Ovary (tissue), 10 donors: ENCODE measurements at regions of chr6 and their contacts with region 1.

Region 1: DNA sequence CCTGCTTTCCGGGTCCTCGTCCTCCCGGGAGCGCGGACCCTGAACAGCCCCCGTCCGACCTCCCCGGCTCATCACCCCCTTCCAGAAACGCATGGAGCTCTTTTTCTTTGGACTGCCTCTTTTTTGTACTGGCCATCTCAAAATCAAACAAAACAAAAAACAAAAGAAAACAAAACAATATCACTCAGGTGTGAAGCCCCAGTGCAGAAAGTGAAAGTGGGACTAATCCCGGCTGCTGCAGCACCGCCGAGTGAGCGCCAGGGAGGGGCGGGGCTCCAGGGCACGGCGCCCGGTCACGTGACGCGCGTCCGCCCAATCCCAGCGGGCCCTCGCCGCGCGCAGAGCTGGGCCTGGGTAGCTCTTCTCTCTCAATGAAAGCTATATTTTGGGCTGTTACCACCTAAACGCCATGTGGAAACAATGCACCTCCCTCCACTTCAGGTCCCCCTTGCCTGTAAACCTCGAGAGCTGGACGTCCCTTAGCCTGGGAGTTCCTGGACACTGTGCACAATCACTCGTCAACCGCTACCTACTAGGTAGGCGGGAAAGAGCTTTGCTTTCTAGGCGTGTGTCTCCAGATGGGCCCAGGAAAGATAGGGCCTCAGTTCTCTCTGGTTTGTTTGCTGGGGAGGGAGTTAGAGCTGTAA is 93.7 kb upstream of the PRDM1 start:
- DNase-seq: peak; percentile 84 to 92 (median 87)
- H3K4me3 ChIP-seq: peak overlapping the region; percentile 68
- H3K27ac ChIP-seq: no peak overlapping the region
- H3K4me1 ChIP-seq: no peaks in the 10 kb centered on the region
- H3K27me3 ChIP-seq: no peaks in the 10 kb centered on the region
- CTCF ChIP-seq: peak in 1 of 3 donors; percentile 8
- EP300 ChIP-seq: no peak
- POLR2A ChIP-seq: peak; percentile 17

Region 2: GRCh38 chr6:105484238-105485161 is 507.9 kb before region 1 on chr6:
- intact Hi-C with region 1: loop called in 1 of 4 experiments (anchors 10 kb)
- DNase-seq: no peak
- H3K4me3 ChIP-seq: no peak overlapping the region
- H3K27ac ChIP-seq: no peak overlapping the region
- H3K4me1 ChIP-seq: peaks cover 5% of the 10 kb centered on the region
- H3K27me3 ChIP-seq: no peaks in the 10 kb centered on the region
- CTCF ChIP-seq: peak; percentile 77 to 97 (median 79)
- EP300 ChIP-seq: no peak
- POLR2A ChIP-seq: no peak

Region 3: DNA sequence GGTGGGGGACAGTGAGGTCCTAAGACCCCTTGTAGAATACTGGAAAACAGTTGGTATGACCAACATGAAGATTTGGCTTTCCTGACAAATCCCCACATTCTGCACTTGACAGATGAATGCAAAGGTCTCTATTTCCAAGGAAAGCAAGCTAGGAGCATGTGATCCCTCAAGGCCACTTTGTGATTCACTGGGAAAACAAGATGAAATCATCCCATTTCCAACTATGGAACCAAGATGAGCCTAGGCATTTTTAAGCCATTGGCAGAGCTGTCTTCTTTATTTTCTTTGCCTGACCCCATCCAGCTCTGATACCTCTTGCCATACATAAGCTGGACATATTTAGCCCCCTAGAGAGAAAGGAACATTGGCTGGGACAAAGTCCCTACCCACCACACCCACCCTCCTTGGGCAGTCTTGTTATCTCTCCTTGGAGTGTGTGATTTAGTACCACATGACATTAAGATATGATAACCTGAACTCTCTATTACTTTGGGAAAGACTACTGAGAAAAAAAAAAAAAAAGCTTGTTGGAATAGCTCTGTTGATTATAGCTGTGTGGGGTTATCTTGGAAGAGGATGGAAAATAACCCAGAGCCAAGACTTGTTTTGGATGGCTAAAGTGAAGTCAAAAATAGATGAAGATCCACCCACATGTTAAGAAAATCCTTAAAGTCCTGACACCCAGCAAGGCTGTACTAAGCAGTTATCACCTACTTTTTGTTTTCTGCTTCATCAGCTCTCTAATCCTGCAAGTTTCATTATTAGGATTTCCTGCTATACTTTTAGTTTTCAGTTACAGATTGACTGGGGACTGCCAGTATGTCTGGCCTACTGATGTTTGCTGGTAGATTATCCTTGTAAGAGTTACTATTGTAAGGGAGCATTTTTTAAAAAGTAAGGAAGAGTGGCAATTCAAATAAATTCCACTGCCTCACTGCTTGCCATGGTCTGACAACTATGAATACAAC is 499.4 kb before region 1 on chr6:
- intact Hi-C with region 1: loop called in 2 of 4 experiments (anchors 10 kb)
- DNase-seq: peak in 2 of 5 donors; percentile 26 to 33
- H3K4me3 ChIP-seq: no peak overlapping the region
- H3K27ac ChIP-seq: peak overlapping the region; percentile 33 to 74
- H3K4me1 ChIP-seq: peaks cover 13% of the 10 kb centered on the region
- H3K27me3 ChIP-seq: no peaks in the 10 kb centered on the region
- CTCF ChIP-seq: no peak
- EP300 ChIP-seq: no peak
- POLR2A ChIP-seq: no peak

Region 4: GRCh38 chr6:105862936-105863607 is 129.4 kb before region 1 on chr6:
- intact Hi-C with region 1: no loop called
- DNase-seq: no peak
- H3K4me3 ChIP-seq: no peak overlapping the region
- H3K27ac ChIP-seq: no peak overlapping the region
- H3K4me1 ChIP-seq: no peaks in the 10 kb centered on the region
- H3K27me3 ChIP-seq: no peaks in the 10 kb centered on the region
- CTCF ChIP-seq: no peak
- EP300 ChIP-seq: no peak
- POLR2A ChIP-seq: no peak

Region 5: GRCh38 chr6:106026748-106027715 is 34.6 kb after region 1 on chr6:
- intact Hi-C with region 1: no loop called
- DNase-seq: no peak
- H3K4me3 ChIP-seq: no peak overlapping the region
- H3K27ac ChIP-seq: no peak overlapping the region
- H3K4me1 ChIP-seq: no peaks in the 10 kb centered on the region
- H3K27me3 ChIP-seq: no peaks in the 10 kb centered on the region
- CTCF ChIP-seq: no peak
- EP300 ChIP-seq: no peak
- POLR2A ChIP-seq: no peak

Region 6: DNA sequence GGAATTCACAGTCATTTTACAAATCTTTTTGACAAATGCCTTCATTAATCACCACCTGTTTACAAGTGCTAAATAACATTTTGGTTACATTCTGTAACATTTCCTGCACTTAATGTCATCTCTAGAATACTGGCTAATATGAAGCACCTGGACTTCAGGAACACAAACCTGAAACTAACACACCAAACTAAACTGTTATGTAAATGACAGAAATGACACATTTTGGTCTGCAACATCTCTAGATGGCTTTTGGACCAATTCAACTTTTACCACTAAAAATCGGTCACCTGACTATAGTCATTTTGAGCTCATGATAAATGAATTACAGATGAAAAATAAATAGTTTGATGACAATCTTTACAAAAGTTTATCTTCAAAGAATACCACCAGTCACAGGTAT is 252.5 kb after region 1 on chr6:
- intact Hi-C with region 1: no loop called
- DNase-seq: no peak
- H3K4me3 ChIP-seq: no peak overlapping the region
- H3K27ac ChIP-seq: no peak overlapping the region
- H3K4me1 ChIP-seq: peaks cover 1% of the 10 kb centered on the region
- H3K27me3 ChIP-seq: no peaks in the 10 kb centered on the region
- CTCF ChIP-seq: no peak
- EP300 ChIP-seq: no peak
- POLR2A ChIP-seq: no peak